CD4-positive, alpha-beta T cell (primary cell): ENCODE measurements at regions of chr1 and their contacts with region 1.

Region 1: DNA sequence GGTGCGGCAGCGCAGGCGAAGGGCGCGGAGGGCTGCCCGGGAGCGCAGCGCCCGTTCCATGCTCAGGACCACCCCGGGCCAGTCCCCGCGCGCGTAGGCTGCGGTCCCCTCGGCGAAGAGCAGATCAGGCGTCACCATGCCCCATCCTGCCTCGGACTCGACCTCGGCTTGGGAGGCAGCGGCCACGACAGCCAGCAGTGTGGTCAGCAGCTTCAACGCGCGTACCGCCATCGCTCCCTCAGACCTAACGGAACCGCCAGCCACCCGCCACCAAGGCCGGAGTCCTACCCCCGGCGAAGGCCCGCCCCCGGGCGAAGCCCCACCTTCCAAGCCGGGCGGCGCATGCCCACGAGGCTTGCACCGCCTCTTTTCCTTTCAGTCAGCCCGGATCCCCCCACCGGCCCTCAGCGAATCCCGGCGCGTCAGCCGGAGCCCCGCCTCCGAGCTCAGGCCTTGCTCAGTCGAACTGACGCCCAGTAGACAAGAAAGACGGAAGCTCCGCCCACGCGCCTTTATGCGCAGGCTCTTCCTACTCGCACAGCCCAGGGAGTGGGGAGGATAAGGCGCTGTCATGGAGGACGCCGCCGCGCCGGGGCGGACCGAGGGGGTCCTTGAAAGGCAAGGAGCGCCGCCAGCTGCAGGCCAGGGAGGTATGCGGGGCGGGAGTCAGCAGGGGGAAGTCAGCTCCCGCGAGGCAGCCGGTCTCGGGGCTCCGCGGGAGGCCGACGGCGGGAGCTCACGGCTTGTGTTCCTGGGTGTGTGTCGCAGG is at the starts of genes C1orf50 and P3H1:
- DNase-seq: peak; percentile 98 to 100 (median 99)
- ATAC-seq: peak; percentile 92
- H3K4me3 ChIP-seq: peak within 1 kb of the TSS; percentile 86
- H3K4me3 Mint-ChIP-seq: no peak within 1 kb of the TSS
- H3K27ac ChIP-seq: peak within 1 kb of the TSS; percentile 49 to 78
- H3K27ac Mint-ChIP-seq: no peak within 1 kb of the TSS
- H3K4me1 ChIP-seq: peaks cover 47% of the 10 kb centered on the region
- H3K4me1 Mint-ChIP-seq: peaks cover 35% of the 10 kb centered on the region
- H3K27me3 ChIP-seq: no peaks in the 10 kb centered on the region
- H3K27me3 Mint-ChIP-seq: no peaks in the 10 kb centered on the region
- CTCF ChIP-seq: no peak
- total RNA-seq, gene C1orf50: 23.1 to 23.9 TPM
- total RNA-seq, gene P3H1: 17.6 to 20.9 TPM

Region 2: DNA sequence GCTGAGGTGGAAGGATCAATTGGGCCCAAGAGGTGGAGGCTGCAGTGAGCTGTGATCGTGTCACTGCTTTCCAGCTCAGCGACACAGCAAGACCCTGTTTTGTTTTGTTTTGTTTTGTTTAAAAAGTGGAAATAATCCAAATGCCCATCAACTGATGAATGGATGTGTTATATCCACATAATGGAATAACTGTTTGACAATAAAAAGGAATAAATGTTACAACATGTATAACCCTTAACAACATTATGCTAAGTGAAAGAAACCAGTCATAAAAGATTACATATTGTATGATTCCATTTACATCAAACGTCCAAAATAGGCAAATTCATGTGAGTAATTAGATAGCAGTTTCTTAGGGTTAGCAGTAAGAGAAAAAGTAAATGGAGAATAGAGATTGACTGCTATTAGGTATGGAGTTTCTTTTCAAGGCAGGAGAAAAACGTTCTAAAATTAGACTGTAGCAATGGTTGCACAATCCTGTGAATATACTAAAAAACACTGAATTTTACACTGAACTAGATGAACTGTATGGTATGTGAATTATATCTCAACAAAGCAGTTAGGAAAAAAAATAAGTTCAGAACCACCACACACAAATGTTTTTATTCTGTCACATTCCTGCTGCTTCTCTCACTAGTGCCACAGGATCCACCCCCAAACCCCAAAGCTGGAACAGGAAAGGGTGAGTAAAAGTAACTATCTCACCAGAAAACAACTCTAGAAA is 447.6 kb before region 1 on chr1:
- CTCF ChIA-PET with region 1: no interaction called
- POLR2A ChIA-PET with region 1: interaction called, 5 read pairs
- intact Hi-C with region 1: loop called in 1 of 2 experiments (anchors 10 kb)
- DNase-seq: peak in 4 of 14 experiments; percentile 20 to 53 (median 35)
- ATAC-seq: peak; percentile 57
- H3K4me3 ChIP-seq: peak overlapping the region; percentile 28
- H3K4me3 Mint-ChIP-seq: peak overlapping the region; percentile 80
- H3K27ac ChIP-seq: peak overlapping the region; percentile 40 to 64
- H3K27ac Mint-ChIP-seq: peak overlapping the region; percentile 81
- H3K4me1 ChIP-seq: peaks cover 23% of the 10 kb centered on the region
- H3K4me1 Mint-ChIP-seq: peaks cover 94% of the 10 kb centered on the region
- H3K27me3 ChIP-seq: no peaks in the 10 kb centered on the region
- H3K27me3 Mint-ChIP-seq: no peaks in the 10 kb centered on the region
- CTCF ChIP-seq: no peak

Region 3: GRCh38 chr1:42681741-42682483 is 85.0 kb before region 1 on chr1 and contains the start of gene YBX1:
- CTCF ChIA-PET with region 1: no interaction called
- POLR2A ChIA-PET with region 1: interaction called, 75 read pairs
- intact Hi-C with region 1: loop called in 1 of 2 experiments (anchors 2 kb)
- DNase-seq: peak; percentile 89 to 99 (median 93)
- ATAC-seq: peak; percentile 90
- H3K4me3 ChIP-seq: peak within 1 kb of the TSS; percentile 80
- H3K4me3 Mint-ChIP-seq: peak within 1 kb of the TSS; percentile 100
- H3K27ac ChIP-seq: peak within 1 kb of the TSS; percentile 83 to 87
- H3K27ac Mint-ChIP-seq: peak within 1 kb of the TSS; percentile 94
- H3K4me1 ChIP-seq: peaks cover 36% of the 10 kb centered on the region
- H3K4me1 Mint-ChIP-seq: peaks cover 50% of the 10 kb centered on the region
- H3K27me3 ChIP-seq: no peaks in the 10 kb centered on the region
- H3K27me3 Mint-ChIP-seq: no peaks in the 10 kb centered on the region
- CTCF ChIP-seq: no peak
- total RNA-seq, gene YBX1: 372 to 389 TPM

Region 4: GRCh38 chr1:42713293-42713692 is 53.6 kb before region 1 on chr1:
- CTCF ChIA-PET with region 1: no interaction called
- POLR2A ChIA-PET with region 1: no interaction called
- intact Hi-C with region 1: no loop called
- DNase-seq: no peak
- ATAC-seq: no peak
- H3K4me3 ChIP-seq: no peak overlapping the region
- H3K4me3 Mint-ChIP-seq: no peak overlapping the region
- H3K27ac ChIP-seq: no peak overlapping the region
- H3K27ac Mint-ChIP-seq: no peak overlapping the region
- H3K4me1 ChIP-seq: no peaks in the 10 kb centered on the region
- H3K4me1 Mint-ChIP-seq: peaks cover 4% of the 10 kb centered on the region
- H3K27me3 ChIP-seq: no peaks in the 10 kb centered on the region
- H3K27me3 Mint-ChIP-seq: no peaks in the 10 kb centered on the region
- CTCF ChIP-seq: no peak

Region 5: DNA sequence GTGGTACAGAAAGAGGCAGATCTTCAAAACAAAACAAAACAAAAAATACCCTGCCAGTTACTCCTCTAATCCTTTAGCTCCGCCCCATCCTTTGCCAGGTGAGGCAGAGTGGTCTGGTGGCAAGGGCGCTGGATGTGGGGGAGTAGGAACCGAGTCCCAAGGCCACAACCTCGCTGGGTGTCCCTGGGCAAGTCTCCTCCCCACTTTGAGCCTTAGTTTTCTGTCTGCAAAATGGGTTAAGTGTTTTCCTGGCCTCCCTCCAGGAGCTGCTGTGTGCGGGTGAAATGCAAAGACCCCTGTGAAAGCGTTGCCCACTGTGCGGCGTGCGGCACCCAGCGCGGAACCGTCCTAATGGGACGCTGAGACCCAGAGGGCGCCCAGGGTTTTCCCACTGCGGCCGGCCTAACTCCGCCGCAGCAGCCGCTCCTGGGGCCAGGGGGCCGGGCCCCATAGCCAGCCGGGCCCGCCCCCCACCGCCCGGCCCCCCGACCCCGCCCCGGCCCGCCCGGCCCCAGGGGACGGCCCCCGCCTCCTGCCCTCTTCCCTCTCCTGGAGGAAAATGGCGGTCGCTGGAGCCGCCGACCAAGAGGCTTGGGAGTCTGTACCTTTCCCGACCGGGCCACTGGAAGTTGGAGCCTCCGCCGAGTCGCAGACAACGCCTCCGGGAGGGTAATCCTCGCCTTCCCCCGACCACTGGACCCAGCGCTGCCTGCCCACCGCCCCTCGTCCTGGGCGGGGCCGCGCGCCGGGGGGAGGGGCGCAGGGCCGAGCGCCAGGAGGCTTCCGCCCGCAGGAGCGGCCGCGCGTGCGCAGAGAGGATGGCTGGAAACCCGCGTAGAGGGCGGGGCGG is 49.9 kb after region 1 on chr1 and contains the starts of genes ERMAP and SVBP:
- CTCF ChIA-PET with region 1: interaction called, 3 read pairs
- POLR2A ChIA-PET with region 1: interaction called, 53 read pairs
- intact Hi-C with region 1: loop called (anchors 1 to 2 kb)
- DNase-seq: peak; percentile 86 to 98 (median 94)
- ATAC-seq: peak; percentile 88
- H3K4me3 ChIP-seq: peak within 1 kb of the TSS; percentile 78
- H3K4me3 Mint-ChIP-seq: peak within 1 kb of the TSS; percentile 96
- H3K27ac ChIP-seq: peak within 1 kb of the TSS; percentile 77 to 79
- H3K27ac Mint-ChIP-seq: peak within 1 kb of the TSS; percentile 89
- H3K4me1 ChIP-seq: peaks cover 10% of the 10 kb centered on the region
- H3K4me1 Mint-ChIP-seq: peaks cover 27% of the 10 kb centered on the region
- H3K27me3 ChIP-seq: no peaks in the 10 kb centered on the region
- H3K27me3 Mint-ChIP-seq: no peaks in the 10 kb centered on the region
- CTCF ChIP-seq: no peak
- total RNA-seq, gene ERMAP: 4.4 to 5.0 TPM
- total RNA-seq, gene SVBP: 19.2 to 21.3 TPM

Region 6: DNA sequence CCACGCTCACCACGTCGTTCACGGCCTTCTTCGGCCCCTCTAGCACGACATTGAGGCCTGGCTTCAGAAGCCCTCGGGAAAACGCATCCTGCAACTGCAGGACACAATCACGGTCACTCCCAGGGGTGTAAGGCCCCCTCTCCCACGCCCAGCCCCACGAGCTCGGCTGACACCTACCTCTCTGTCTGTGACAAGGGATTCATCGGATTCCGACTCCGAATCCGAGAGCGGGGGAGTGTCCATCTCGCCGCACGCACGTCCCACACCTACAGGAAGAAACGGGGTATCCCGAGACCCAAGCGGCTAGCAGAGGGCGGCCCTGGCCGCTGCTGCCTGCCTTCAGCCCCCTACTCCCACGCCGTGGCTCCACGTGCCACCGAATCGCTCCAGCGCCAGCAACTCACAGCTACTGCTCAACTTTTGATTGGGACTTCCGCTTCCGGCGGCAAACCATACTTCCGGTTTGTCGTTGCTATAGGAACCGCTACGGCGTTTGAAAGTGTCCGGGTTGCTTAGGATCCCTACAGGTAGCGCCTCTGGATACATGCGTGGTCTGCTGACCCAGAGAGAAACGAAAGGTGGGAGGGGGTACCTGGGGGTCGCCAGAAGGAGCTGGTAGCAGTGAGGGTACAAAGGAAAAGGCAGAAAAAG is 405.1 kb after region 1 on chr1 and contains the starts of genes CFAP57 and EBNA1BP2:
- CTCF ChIA-PET with region 1: no interaction called
- POLR2A ChIA-PET with region 1: no interaction called
- intact Hi-C with region 1: loop called in 1 of 2 experiments (anchors 5 kb)
- DNase-seq: peak; percentile 83 to 97 (median 88)
- ATAC-seq: peak; percentile 75
- H3K4me3 ChIP-seq: peak within 1 kb of the TSS; percentile 93
- H3K4me3 Mint-ChIP-seq: peak within 1 kb of the TSS; percentile 96
- H3K27ac ChIP-seq: peak within 1 kb of the TSS; percentile 25 to 69
- H3K27ac Mint-ChIP-seq: peak within 1 kb of the TSS; percentile 82
- H3K4me1 ChIP-seq: peaks cover 14% of the 10 kb centered on the region
- H3K4me1 Mint-ChIP-seq: peaks cover 33% of the 10 kb centered on the region
- H3K27me3 ChIP-seq: peaks cover 9 to 14% of the 10 kb centered on the region in 2 experiments
- H3K27me3 Mint-ChIP-seq: peaks cover 16% of the 10 kb centered on the region
- CTCF ChIP-seq: no peak
- total RNA-seq, gene CFAP57: not detected
- total RNA-seq, gene EBNA1BP2: 14.8 to 15.1 TPM

Region 7: DNA sequence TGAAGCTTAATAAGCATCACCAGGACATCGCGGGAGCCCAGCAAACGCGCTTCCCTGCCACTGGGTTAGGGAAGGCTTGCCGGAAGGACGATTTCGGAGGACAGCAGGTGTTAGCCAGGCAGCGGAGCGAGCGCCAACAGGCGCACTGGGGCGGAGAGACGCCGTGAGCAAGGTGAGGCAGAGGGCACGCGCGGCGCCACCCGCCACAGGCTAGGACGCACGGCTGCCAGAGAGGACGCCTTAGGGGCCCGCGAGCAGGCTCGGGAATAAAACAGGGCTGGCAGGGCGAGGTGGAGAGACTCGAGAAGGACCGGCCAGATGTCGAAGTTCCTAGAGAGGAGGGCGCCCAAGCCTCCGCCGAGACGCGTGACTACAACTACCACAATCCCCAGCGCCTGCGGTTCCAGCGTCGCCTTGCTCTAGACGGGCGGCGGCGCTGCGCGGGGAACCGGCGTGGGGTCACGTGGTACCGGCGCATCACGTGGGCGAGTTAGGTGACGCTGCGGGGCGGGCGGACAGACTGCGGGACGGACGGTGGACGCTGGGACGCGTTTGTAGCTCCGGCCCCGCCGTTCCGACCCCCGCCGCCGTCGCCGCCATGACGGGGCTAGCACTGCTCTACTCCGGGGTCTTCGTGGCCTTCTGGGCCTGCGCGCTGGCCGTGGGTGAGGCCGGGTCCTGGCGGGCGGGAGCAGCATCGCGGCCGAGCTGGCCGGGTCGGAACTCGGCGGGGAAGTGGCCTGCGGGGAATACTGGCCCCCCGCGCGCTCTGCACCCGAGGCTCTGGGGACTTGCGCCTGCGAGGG is 1207.7 kb after region 1 on chr1 and contains the start of gene ATP6V0B:
- CTCF ChIA-PET with region 1: no interaction called
- POLR2A ChIA-PET with region 1: no interaction called
- intact Hi-C with region 1: loop called in 1 of 2 experiments (anchors 5 kb)
- DNase-seq: peak; percentile 85 to 96 (median 91)
- ATAC-seq: peak; percentile 72
- H3K4me3 ChIP-seq: peak within 1 kb of the TSS; percentile 99
- H3K4me3 Mint-ChIP-seq: peak within 1 kb of the TSS; percentile 96
- H3K27ac ChIP-seq: peak within 1 kb of the TSS; percentile 78 to 86
- H3K27ac Mint-ChIP-seq: peak within 1 kb of the TSS; percentile 92
- H3K4me1 ChIP-seq: peaks cover 61% of the 10 kb centered on the region
- H3K4me1 Mint-ChIP-seq: peaks cover 68% of the 10 kb centered on the region
- H3K27me3 ChIP-seq: peaks cover under 1% of the 10 kb centered on the region in 2 experiments
- H3K27me3 Mint-ChIP-seq: peaks cover under 1% of the 10 kb centered on the region
- CTCF ChIP-seq: no peak
- total RNA-seq, gene ATP6V0B: 42.9 to 47.0 TPM